Activated CD4-positive, alpha-beta T cell treated with anti-CD3 and anti-CD28 coated beads, Interleukin-2, amount 10 ng/mL, durations not matched to agents 24 days and 14 days (primary cell): ENCODE measurements at regions of chr16 and their contacts with region 1.

Region 1: GRCh38 chr16:75764154-75764768 is 38.0 kb upstream of the CPHXL start:
- DNase-seq: peak; percentile 88
- H3K4me3 Mint-ChIP-seq: no peak overlapping the region
- H3K27ac Mint-ChIP-seq: no peak overlapping the region
- H3K4me1 Mint-ChIP-seq: peaks cover 4% of the 10 kb centered on the region
- H3K27me3 Mint-ChIP-seq: peaks cover 7% of the 10 kb centered on the region

Region 2: GRCh38 chr16:75064403-75065148 is 699.7 kb before region 1 on chr16:
- intact Hi-C with region 1: no loop called
- DNase-seq: peak; percentile 74
- H3K4me3 Mint-ChIP-seq: peak overlapping the region; percentile 69
- H3K27ac Mint-ChIP-seq: peak overlapping the region; percentile 85
- H3K4me1 Mint-ChIP-seq: peaks cover 50% of the 10 kb centered on the region
- H3K27me3 Mint-ChIP-seq: no peaks in the 10 kb centered on the region

Region 3: GRCh38 chr16:75198135-75198600 is 566.1 kb before region 1 on chr16:
- intact Hi-C with region 1: loop called (anchors 1 kb)
- DNase-seq: no peak
- H3K4me3 Mint-ChIP-seq: no peak overlapping the region
- H3K27ac Mint-ChIP-seq: no peak overlapping the region
- H3K4me1 Mint-ChIP-seq: peaks cover 16% of the 10 kb centered on the region
- H3K27me3 Mint-ChIP-seq: peaks cover 30% of the 10 kb centered on the region

Region 4: DNA sequence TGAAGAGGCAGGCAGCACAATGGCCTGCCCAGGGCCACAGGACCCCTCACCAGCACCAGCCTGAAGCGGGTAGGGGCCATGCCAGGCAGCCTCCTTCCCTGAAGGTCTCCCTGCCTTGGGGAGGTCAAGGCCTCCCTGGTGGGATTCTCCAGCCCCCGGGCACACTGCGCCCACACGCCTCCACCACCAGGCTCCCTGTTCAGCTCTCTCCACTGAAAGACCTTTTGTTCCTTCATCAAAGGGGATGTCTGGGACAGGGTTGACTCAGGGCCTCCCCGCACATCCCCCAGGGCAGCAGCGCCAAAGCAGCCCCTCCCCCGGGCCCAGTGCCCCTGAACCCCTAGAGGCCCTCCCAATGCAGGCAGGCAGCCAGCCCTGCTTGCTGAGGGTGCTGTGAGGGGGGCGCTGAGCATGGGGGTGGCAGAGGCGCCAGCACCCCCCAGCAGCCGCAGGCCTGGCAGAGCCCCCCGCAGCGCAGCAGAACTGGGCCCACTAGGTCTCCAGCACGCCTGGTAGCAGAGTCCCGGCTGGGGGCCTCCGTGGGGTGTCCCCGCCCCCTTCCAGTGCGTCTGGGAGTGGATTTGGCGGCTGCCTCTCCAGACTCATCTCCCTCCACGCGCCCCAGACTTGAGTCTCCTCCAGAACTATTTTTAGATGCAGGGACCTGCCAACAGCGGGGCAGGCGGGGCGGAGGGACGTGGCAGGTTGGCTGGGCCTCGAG is 526.0 kb before region 1 on chr16:
- intact Hi-C with region 1: loop called (anchors 10 kb)
- DNase-seq: no peak
- H3K4me3 Mint-ChIP-seq: no peak overlapping the region
- H3K27ac Mint-ChIP-seq: no peak overlapping the region
- H3K4me1 Mint-ChIP-seq: peaks cover 2% of the 10 kb centered on the region
- H3K27me3 Mint-ChIP-seq: no peaks in the 10 kb centered on the region

Region 5: GRCh38 chr16:75471723-75472633 is 292.3 kb before region 1 on chr16:
- intact Hi-C with region 1: loop called (anchors 1 kb)
- DNase-seq: peak; percentile 82
- H3K4me3 Mint-ChIP-seq: no peak overlapping the region
- H3K27ac Mint-ChIP-seq: no peak overlapping the region
- H3K4me1 Mint-ChIP-seq: peaks cover 3% of the 10 kb centered on the region
- H3K27me3 Mint-ChIP-seq: peaks cover 3% of the 10 kb centered on the region

Region 6: GRCh38 chr16:75519881-75520280 is 244.4 kb before region 1 on chr16:
- intact Hi-C with region 1: loop called (anchors 1 kb)
- DNase-seq: no peak
- H3K4me3 Mint-ChIP-seq: no peak overlapping the region
- H3K27ac Mint-ChIP-seq: no peak overlapping the region
- H3K4me1 Mint-ChIP-seq: peaks cover 10% of the 10 kb centered on the region
- H3K27me3 Mint-ChIP-seq: peaks cover 7% of the 10 kb centered on the region

Region 7: GRCh38 chr16:75555707-75556430 is 208.4 kb before region 1 on chr16 and contains the start of gene TMEM231:
- intact Hi-C with region 1: loop called (anchors 10 kb)
- DNase-seq: peak; percentile 99
- H3K4me3 Mint-ChIP-seq: peak within 1 kb of the TSS; percentile 92
- H3K27ac Mint-ChIP-seq: peak within 1 kb of the TSS; percentile 90
- H3K4me1 Mint-ChIP-seq: peaks cover 8% of the 10 kb centered on the region
- H3K27me3 Mint-ChIP-seq: peaks cover 20% of the 10 kb centered on the region
- total RNA-seq, gene TMEM231: 4.0 and 4.4 TPM in 2 replicates

Region 8: GRCh38 chr16:75584108-75584507 is 180.2 kb before region 1 on chr16:
- intact Hi-C with region 1: no loop called
- DNase-seq: no peak
- H3K4me3 Mint-ChIP-seq: no peak overlapping the region
- H3K27ac Mint-ChIP-seq: no peak overlapping the region
- H3K4me1 Mint-ChIP-seq: peaks cover 7% of the 10 kb centered on the region
- H3K27me3 Mint-ChIP-seq: no peaks in the 10 kb centered on the region

Region 9: DNA sequence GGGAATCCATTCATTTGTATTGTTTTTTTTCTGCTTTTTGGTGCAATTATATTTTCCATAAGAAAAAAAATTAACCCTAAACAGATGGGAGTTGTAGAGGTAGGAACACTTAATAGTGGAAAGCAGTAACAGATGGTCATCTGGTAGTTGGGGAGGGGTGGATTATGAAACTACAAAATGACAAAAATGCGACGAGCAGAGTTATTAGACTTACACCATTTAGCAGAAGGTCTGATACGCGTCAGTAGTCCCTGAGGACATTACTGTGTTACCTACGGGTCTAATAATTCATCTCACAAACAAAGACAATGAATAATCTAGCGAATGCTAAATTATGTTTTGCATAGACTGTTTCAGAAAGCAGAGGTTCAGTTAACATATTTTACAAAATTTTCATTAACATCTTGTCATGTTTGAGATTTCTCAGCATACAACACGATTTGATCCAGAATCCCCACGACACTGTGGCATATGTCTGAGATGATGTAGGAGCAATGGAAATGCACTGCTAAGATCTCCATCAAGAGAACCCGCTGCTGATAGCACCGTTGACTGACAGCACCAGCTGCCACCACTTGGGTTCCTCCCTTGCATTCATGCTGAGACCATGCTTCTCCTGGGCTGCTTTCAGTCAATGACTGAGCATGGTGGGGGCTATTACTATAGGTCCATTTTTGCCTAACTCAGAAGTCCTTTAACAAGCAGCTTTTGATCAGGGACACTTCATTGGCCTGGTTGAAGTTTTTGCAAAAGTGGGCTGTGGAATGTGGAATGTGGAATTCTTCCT is 144.3 kb after region 1 on chr16:
- intact Hi-C with region 1: no loop called
- DNase-seq: no peak
- H3K4me3 Mint-ChIP-seq: no peak overlapping the region
- H3K27ac Mint-ChIP-seq: no peak overlapping the region
- H3K4me1 Mint-ChIP-seq: peaks cover 1% of the 10 kb centered on the region
- H3K27me3 Mint-ChIP-seq: no peaks in the 10 kb centered on the region